HepG2 (cell line): ENCODE measurements at regions of chr13 and their contacts with region 1.

Region 1: GRCh38 chr13:27826379-27827353 is 34.4 kb downstream of the GSX1 start:
- DNase-seq: peak; percentile 66
- ATAC-seq: peak; percentile 89
- H3K4me3 ChIP-seq: peak overlapping the region in 2 of 3 experiments; percentile 11 to 60; a peak in 2 of 6 replicates
- H3K27ac ChIP-seq: no peak overlapping the region
- H3K4me1 ChIP-seq: peaks cover 15% of the 10 kb centered on the region; the same call in 1 of the 2 replicates
- H3K27me3 ChIP-seq: peaks cover 2 to 23% of the 10 kb centered on the region in 2 experiments; a peak in 3 of 5 replicates
- CTCF ChIP-seq: peak; percentile 91
- EP300 ChIP-seq: no peak
- POLR2A ChIP-seq: no peak
- RAD21 ChIP-seq: peak; percentile 91

Region 2: GRCh38 chr13:27362064-27362883 is 464.4 kb before region 1 on chr13:
- CTCF ChIA-PET with region 1: interaction called, 24 read pairs
- POLR2A ChIA-PET with region 1: interaction called, 3 read pairs
- in situ Hi-C with region 1: no loop called
- intact Hi-C with region 1: loop called (anchors 1 kb)
- DNase-seq: peak; percentile 68
- ATAC-seq: peak; percentile 98
- H3K4me3 ChIP-seq: peak overlapping the region; percentile 47 to 67 (median 47)
- H3K27ac ChIP-seq: no peak overlapping the region
- H3K4me1 ChIP-seq: peaks cover 12% of the 10 kb centered on the region
- H3K27me3 ChIP-seq: peaks cover 2 to 22% of the 10 kb centered on the region in 2 experiments; a peak in 3 of 5 replicates
- CTCF ChIP-seq: peak; percentile 98
- EP300 ChIP-seq: no peak
- POLR2A ChIP-seq: no peak
- RAD21 ChIP-seq: peak; percentile 92

Region 3: DNA sequence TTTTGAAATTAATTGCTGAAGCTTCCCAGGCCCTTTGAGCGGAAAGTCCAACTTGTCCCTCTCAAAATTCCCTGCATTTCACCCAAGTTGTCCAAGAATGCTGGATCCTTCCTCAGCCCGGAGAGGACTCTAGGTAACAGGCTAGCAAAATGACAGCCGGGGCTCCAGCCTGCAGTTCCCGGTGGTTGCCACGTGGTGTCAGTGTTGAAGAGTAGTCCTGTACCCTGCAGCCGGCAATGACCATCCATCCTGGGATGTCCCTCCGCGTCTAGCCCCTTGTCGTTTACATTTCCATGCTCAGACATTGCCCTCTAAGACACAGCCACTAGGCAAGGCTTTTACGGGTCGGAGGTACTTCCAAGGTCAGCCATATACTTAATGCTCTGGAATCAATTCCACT is 344.9 kb before region 1 on chr13:
- CTCF ChIA-PET with region 1: interaction called, 13 read pairs
- POLR2A ChIA-PET with region 1: no interaction called
- in situ Hi-C with region 1: no loop called
- intact Hi-C with region 1: loop called (anchors 5 kb)
- DNase-seq: peak; percentile 37
- ATAC-seq: peak; percentile 58
- H3K4me3 ChIP-seq: no peak overlapping the region
- H3K27ac ChIP-seq: no peak overlapping the region
- H3K4me1 ChIP-seq: peaks cover 14% of the 10 kb centered on the region
- H3K27me3 ChIP-seq: no peaks in the 10 kb centered on the region
- CTCF ChIP-seq: peak; percentile 79
- EP300 ChIP-seq: no peak
- POLR2A ChIP-seq: no peak
- RAD21 ChIP-seq: no peak; the same call in 1 of the 2 replicates

Region 4: GRCh38 chr13:27770809-27771208 is 55.9 kb before region 1 on chr13:
- CTCF ChIA-PET with region 1: interaction called, 13 read pairs
- POLR2A ChIA-PET with region 1: no interaction called
- in situ Hi-C with region 1: loop called (anchors 5 kb)
- intact Hi-C with region 1: loop called (anchors 1 kb)
- DNase-seq: peak; percentile 42
- ATAC-seq: peak; percentile 88
- H3K4me3 ChIP-seq: no peak overlapping the region
- H3K27ac ChIP-seq: no peak overlapping the region
- H3K4me1 ChIP-seq: peaks cover 13% of the 10 kb centered on the region
- H3K27me3 ChIP-seq: no peaks in the 10 kb centered on the region; a peak in 2 of 5 replicates
- CTCF ChIP-seq: peak; percentile 75
- EP300 ChIP-seq: no peak
- POLR2A ChIP-seq: no peak
- RAD21 ChIP-seq: no peak

Region 5: GRCh38 chr13:27878274-27878673 is 51.6 kb after region 1 on chr13:
- CTCF ChIA-PET with region 1: no interaction called
- POLR2A ChIA-PET with region 1: no interaction called
- in situ Hi-C with region 1: no loop called
- intact Hi-C with region 1: no loop called
- DNase-seq: no peak
- ATAC-seq: no peak
- H3K4me3 ChIP-seq: no peak overlapping the region
- H3K27ac ChIP-seq: no peak overlapping the region
- H3K4me1 ChIP-seq: no peaks in the 10 kb centered on the region
- H3K27me3 ChIP-seq: no peaks in the 10 kb centered on the region
- CTCF ChIP-seq: no peak
- EP300 ChIP-seq: no peak
- POLR2A ChIP-seq: no peak
- RAD21 ChIP-seq: no peak

Region 6: DNA sequence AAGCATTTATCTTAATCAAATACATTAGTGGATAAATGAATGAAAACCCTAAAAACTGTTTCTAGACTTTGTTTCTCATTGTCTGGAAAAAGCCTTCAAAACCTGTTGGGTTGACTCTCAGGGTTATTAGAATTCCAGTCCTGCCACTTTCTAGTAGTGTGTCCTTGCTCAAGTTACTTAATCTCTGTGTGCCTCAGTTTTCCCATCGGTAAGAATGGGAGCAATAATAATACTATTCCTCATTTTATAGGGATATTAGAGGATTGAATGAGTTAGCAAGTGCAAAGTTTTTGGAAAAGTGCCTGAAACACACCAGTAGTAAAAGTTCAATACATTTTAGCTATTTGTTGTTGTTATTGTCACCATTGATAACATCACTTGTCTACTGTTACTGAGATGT is 158.9 kb after region 1 on chr13:
- CTCF ChIA-PET with region 1: interaction called, 33 read pairs
- POLR2A ChIA-PET with region 1: interaction called, 5 read pairs
- in situ Hi-C with region 1: loop called (anchors 5 kb)
- intact Hi-C with region 1: loop called (anchors 1 kb)
- DNase-seq: no peak
- ATAC-seq: no peak
- H3K4me3 ChIP-seq: no peak overlapping the region
- H3K27ac ChIP-seq: no peak overlapping the region
- H3K4me1 ChIP-seq: peaks cover 9% of the 10 kb centered on the region
- H3K27me3 ChIP-seq: peaks cover 7 to 14% of the 10 kb centered on the region in 2 experiments
- CTCF ChIP-seq: no peak
- EP300 ChIP-seq: no peak
- POLR2A ChIP-seq: no peak
- RAD21 ChIP-seq: no peak